Naive thymus-derived CD4-positive, alpha-beta T cell (primary cell): ENCODE measurements at regions of chr1 and their contacts with region 1.

Region 1: GRCh38 chr1:108643492-108644335 is 17.2 kb downstream of the HENMT1 start:
- DNase-seq: peak in 7 of 9 donors; percentile 59 to 78 (median 67)
- ATAC-seq: peak; percentile 45
- H3K4me3 ChIP-seq: no peak overlapping the region
- H3K4me3 Mint-ChIP-seq: peak overlapping the region in 9 of 10 donors; percentile 4 to 70 (median 47)
- H3K27ac ChIP-seq: peak overlapping the region; percentile 71
- H3K27ac Mint-ChIP-seq: peak overlapping the region; percentile 68 to 100 (median 98)
- H3K4me1 ChIP-seq: peaks cover 49 to 52% of the 10 kb centered on the region in 2 donors
- H3K4me1 Mint-ChIP-seq: peaks cover 55 to 81% (median 75%) of the 10 kb centered on the region in 7 donors
- H3K27me3 ChIP-seq: no peaks in the 10 kb centered on the region
- H3K27me3 Mint-ChIP-seq: no peaks in the 10 kb centered on the region

Region 2: GRCh38 chr1:108590957-108591356 is 52.8 kb before region 1 on chr1:
- CTCF ChIA-PET with region 1: no interaction called
- POLR2A ChIA-PET with region 1: no interaction called
- intact Hi-C with region 1: loop called in 1 of 2 experiments (anchors 1 kb)
- DNase-seq: peak in 7 of 9 donors; percentile 4 to 55 (median 43)
- ATAC-seq: peak; percentile 87
- H3K4me3 ChIP-seq: no peak overlapping the region
- H3K4me3 Mint-ChIP-seq: no peak overlapping the region
- H3K27ac ChIP-seq: no peak overlapping the region
- H3K27ac Mint-ChIP-seq: peak overlapping the region in 2 of 9 donors; percentile 28 to 63
- H3K4me1 ChIP-seq: peaks cover 0 to 22% of the 10 kb centered on the region in 2 donors
- H3K4me1 Mint-ChIP-seq: peaks cover 19 to 49% (median 45%) of the 10 kb centered on the region in 7 donors
- H3K27me3 ChIP-seq: no peaks in the 10 kb centered on the region
- H3K27me3 Mint-ChIP-seq: no peaks in the 10 kb centered on the region

Region 3: DNA sequence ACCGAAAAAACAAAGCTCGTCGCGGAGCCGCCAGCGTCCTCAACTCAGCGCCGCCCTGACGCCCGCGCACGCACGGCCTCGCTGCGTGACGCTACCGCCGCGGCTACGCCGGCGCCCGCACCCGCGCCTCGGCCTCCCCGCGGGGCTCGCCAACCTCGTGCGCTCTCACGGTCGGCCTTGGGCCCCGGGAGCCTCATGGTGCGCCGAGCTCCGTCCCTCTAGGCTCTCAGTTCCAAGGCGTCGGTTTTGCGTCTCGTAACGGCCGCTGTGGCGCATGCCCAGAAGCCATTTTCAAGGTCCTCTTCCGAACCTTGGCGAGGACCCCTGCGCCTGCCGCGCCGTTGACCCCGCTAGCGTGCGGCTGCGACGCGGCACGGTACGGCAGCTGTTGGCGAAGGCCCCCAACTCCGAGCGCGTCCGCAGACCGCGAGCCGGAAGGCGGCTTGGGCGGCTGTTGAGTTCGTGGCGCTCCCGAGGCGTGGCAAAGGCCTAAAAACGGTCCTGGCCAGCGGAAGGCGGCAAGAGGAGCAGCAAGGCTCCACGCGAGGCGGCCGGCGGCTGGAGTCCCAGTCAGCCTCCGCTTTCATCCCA is 17.4 kb after region 1 on chr1 and contains the start of gene HENMT1:
- CTCF ChIA-PET with region 1: interaction called, 21 read pairs
- POLR2A ChIA-PET with region 1: interaction called, 236 read pairs
- intact Hi-C with region 1: loop called (anchors 1 kb)
- DNase-seq: peak; percentile 69 to 91 (median 88)
- ATAC-seq: peak; percentile 92
- H3K4me3 ChIP-seq: peak within 1 kb of the TSS; percentile 75
- H3K4me3 Mint-ChIP-seq: peak within 1 kb of the TSS; percentile 78 to 89 (median 85)
- H3K27ac ChIP-seq: peak within 1 kb of the TSS; percentile 99
- H3K27ac Mint-ChIP-seq: peak within 1 kb of the TSS; percentile 93 to 98 (median 96)
- H3K4me1 ChIP-seq: peaks cover 7 to 9% of the 10 kb centered on the region in 2 donors
- H3K4me1 Mint-ChIP-seq: peaks cover 11 to 46% (median 37%) of the 10 kb centered on the region in 7 donors
- H3K27me3 ChIP-seq: no peaks in the 10 kb centered on the region
- H3K27me3 Mint-ChIP-seq: no peaks in the 10 kb centered on the region
- total RNA-seq, gene HENMT1: 5.8 to 17.3 (median 13.5) TPM

Region 4: DNA sequence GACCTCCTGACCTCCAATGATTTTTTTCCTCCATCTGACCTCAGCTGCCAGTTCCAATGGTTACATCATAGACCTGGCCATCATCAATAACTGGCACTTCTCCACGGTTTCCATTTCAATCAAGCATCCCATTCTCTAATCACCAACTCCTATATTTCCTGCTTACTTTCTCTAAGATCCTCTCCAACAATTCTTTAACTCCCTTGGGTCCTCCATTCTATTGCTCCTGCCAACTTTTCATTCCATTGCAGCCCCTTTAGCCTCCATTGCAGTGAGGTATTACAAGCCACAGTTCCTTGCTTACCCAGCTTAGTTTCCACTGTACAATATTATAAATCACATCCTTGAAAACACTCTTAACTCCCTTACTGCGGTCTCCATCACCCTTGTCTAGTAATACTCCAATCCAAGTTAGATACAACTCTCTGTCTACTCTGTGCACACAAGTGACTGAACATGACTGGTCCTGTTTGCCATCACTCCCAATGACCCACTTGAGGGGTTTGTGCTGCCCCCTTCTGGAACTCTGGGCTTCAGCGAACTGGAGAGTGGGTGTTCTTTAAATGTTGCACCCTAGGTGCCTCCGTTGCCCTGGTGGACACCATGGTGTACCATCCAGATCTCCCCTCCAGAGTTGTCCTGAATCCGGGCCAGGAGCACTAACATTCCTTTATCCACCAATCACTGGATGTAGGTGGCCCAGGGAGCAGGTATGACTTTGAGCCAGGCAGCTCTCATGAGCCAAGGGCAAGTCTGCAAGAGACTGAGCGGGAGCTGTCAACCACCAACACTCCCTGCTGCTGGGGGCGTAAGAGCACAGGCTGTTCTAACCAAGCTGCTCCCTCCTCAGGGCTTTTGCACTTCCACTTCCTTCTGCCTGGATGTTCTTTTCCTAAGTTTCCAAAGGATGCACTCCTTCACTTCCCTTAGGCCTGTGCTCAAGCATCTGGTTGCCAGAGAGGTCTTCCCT is 65.3 kb after region 1 on chr1:
- CTCF ChIA-PET with region 1: no interaction called
- POLR2A ChIA-PET with region 1: interaction called, 9 read pairs
- intact Hi-C with region 1: loop called in 1 of 2 experiments (anchors 1 kb)
- DNase-seq: peak; percentile 24 to 65 (median 54)
- ATAC-seq: peak; percentile 87
- H3K4me3 ChIP-seq: no peak overlapping the region
- H3K4me3 Mint-ChIP-seq: peak overlapping the region in 2 of 10 donors; percentile 15 to 38
- H3K27ac ChIP-seq: no peak overlapping the region
- H3K27ac Mint-ChIP-seq: peak overlapping the region in 3 of 9 donors; percentile 1 to 38 (median 2)
- H3K4me1 ChIP-seq: peaks cover 21 to 24% of the 10 kb centered on the region in 2 donors
- H3K4me1 Mint-ChIP-seq: peaks cover 7 to 44% (median 33%) of the 10 kb centered on the region in 7 donors
- H3K27me3 ChIP-seq: no peaks in the 10 kb centered on the region
- H3K27me3 Mint-ChIP-seq: peaks cover 0 to 20% (median 0%) of the 10 kb centered on the region in 5 donors

Region 5: GRCh38 chr1:108897865-108898720 is 254.4 kb after region 1 on chr1:
- CTCF ChIA-PET with region 1: interaction called, 3 read pairs
- POLR2A ChIA-PET with region 1: no interaction called
- intact Hi-C with region 1: loop called in 1 of 2 experiments (anchors 1 kb)
- DNase-seq: peak in 7 of 9 donors; percentile 30 to 67 (median 54)
- ATAC-seq: peak; percentile 82
- H3K4me3 ChIP-seq: no peak overlapping the region
- H3K4me3 Mint-ChIP-seq: no peak overlapping the region
- H3K27ac ChIP-seq: no peak overlapping the region
- H3K27ac Mint-ChIP-seq: no peak overlapping the region
- H3K4me1 ChIP-seq: no peaks in the 10 kb centered on the region
- H3K4me1 Mint-ChIP-seq: peaks cover 0 to 4% (median 1%) of the 10 kb centered on the region in 7 donors
- H3K27me3 ChIP-seq: no peaks in the 10 kb centered on the region
- H3K27me3 Mint-ChIP-seq: peaks cover 0 to 4% (median 3%) of the 10 kb centered on the region in 5 donors